ENCODE measurements at regions of chr16 and their contacts with region 1.

Region 1: GRCh38 chr16:11797166-11797956 is at the start of gene ZC3H7A:
- DNase-seq: peak; percentile 97
- ATAC-seq: peak; percentile 97
- H3K4me3 ChIP-seq: peak within 1 kb of the TSS; percentile 81 to 99 (median 87)
- H3K4me3 Mint-ChIP-seq: peak within 1 kb of the TSS; percentile 89
- H3K27ac ChIP-seq: peak within 1 kb of the TSS; percentile 93 to 96
- H3K27ac Mint-ChIP-seq: peak within 1 kb of the TSS; percentile 98
- H3K4me1 ChIP-seq: peaks cover 40 to 43% of the 10 kb centered on the region in 2 donors
- H3K4me1 Mint-ChIP-seq: peaks cover 67% of the 10 kb centered on the region
- H3K27me3 ChIP-seq: no peaks in the 10 kb centered on the region
- H3K27me3 Mint-ChIP-seq: no peaks in the 10 kb centered on the region
- CTCF ChIP-seq: peak; percentile 65
- total RNA-seq, gene ZC3H7A: 113 and 126 TPM in 2 replicates

Region 2: GRCh38 chr16:11047057-11047456 is 750.3 kb before region 1 on chr16:
- CTCF ChIA-PET with region 1: no interaction called
- POLR2A ChIA-PET with region 1: no interaction called
- intact Hi-C with region 1: no loop called
- DNase-seq: no peak
- ATAC-seq: no peak
- H3K4me3 ChIP-seq: no peak overlapping the region
- H3K4me3 Mint-ChIP-seq: no peak overlapping the region
- H3K27ac ChIP-seq: no peak overlapping the region
- H3K27ac Mint-ChIP-seq: no peak overlapping the region
- H3K4me1 ChIP-seq: peaks cover 6 to 8% of the 10 kb centered on the region in 2 donors
- H3K4me1 Mint-ChIP-seq: peaks cover 10% of the 10 kb centered on the region
- H3K27me3 ChIP-seq: no peaks in the 10 kb centered on the region
- H3K27me3 Mint-ChIP-seq: no peaks in the 10 kb centered on the region
- CTCF ChIP-seq: no peak

Region 3: GRCh38 chr16:11586856-11587642 is 210.3 kb before region 1 on chr16 and contains the start of gene LITAF:
- CTCF ChIA-PET with region 1: no interaction called
- POLR2A ChIA-PET with region 1: interaction called, 5 read pairs
- intact Hi-C with region 1: loop called (anchors 5 kb)
- DNase-seq: peak; percentile 78
- ATAC-seq: peak; percentile 59
- H3K4me3 ChIP-seq: peak within 1 kb of the TSS; percentile 71 to 91 (median 75)
- H3K4me3 Mint-ChIP-seq: peak within 1 kb of the TSS; percentile 94
- H3K27ac ChIP-seq: peak within 1 kb of the TSS; percentile 82 to 97
- H3K27ac Mint-ChIP-seq: peak within 1 kb of the TSS; percentile 97
- H3K4me1 ChIP-seq: peaks cover 42 to 50% of the 10 kb centered on the region in 2 donors
- H3K4me1 Mint-ChIP-seq: peaks cover 48% of the 10 kb centered on the region
- H3K27me3 ChIP-seq: no peaks in the 10 kb centered on the region
- H3K27me3 Mint-ChIP-seq: no peaks in the 10 kb centered on the region
- CTCF ChIP-seq: no peak
- total RNA-seq, gene LITAF: 125 and 131 TPM in 2 replicates

Region 4: GRCh38 chr16:11742539-11743307 is 54.6 kb before region 1 on chr16 and contains the start of gene TXNDC11:
- CTCF ChIA-PET with region 1: interaction called, 23 read pairs
- POLR2A ChIA-PET with region 1: interaction called, 30 read pairs
- intact Hi-C with region 1: loop called (anchors 1 kb)
- DNase-seq: peak; percentile 100
- ATAC-seq: peak; percentile 91
- H3K4me3 ChIP-seq: peak within 1 kb of the TSS; percentile 76 to 97 (median 83)
- H3K4me3 Mint-ChIP-seq: peak within 1 kb of the TSS; percentile 97
- H3K27ac ChIP-seq: peak within 1 kb of the TSS; percentile 81 to 88
- H3K27ac Mint-ChIP-seq: peak within 1 kb of the TSS; percentile 96
- H3K4me1 ChIP-seq: peaks cover 31 to 44% of the 10 kb centered on the region in 2 donors
- H3K4me1 Mint-ChIP-seq: peaks cover 52% of the 10 kb centered on the region
- H3K27me3 ChIP-seq: no peaks in the 10 kb centered on the region
- H3K27me3 Mint-ChIP-seq: no peaks in the 10 kb centered on the region
- CTCF ChIP-seq: no peak
- total RNA-seq, gene TXNDC11: 49.7 and 50.2 TPM in 2 replicates

Region 5: DNA sequence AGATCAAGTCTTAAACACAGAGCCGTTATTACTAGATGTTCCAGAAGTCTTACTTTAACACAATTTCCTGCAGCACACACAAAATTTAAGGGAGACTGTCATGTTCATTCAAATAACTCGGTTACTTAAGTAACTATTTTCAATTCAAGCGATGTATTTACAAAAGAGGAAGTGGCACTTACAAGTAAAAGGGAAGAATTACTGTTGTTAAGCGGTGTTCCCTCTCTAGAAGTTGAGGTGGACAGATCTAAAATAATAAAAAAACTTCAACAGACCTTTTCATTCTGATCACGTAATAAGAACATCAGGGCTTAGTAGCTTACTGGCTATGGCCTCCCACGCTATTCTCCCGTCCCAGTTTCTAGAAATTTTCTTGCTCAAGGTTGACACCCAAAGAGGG is 28.5 kb before region 1 on chr16:
- CTCF ChIA-PET with region 1: interaction called, 15 read pairs
- POLR2A ChIA-PET with region 1: interaction called, 8 read pairs
- intact Hi-C with region 1: loop called (anchors 1 kb)
- DNase-seq: peak; percentile 75
- ATAC-seq: peak; percentile 76
- H3K4me3 ChIP-seq: peak overlapping the region in 3 of 5 experiments; percentile 12 to 32 (median 13)
- H3K4me3 Mint-ChIP-seq: peak overlapping the region; percentile 73
- H3K27ac ChIP-seq: peak overlapping the region; percentile 67 to 68
- H3K27ac Mint-ChIP-seq: peak overlapping the region; percentile 89
- H3K4me1 ChIP-seq: peaks cover 25 to 39% of the 10 kb centered on the region in 2 donors
- H3K4me1 Mint-ChIP-seq: peaks cover 47% of the 10 kb centered on the region
- H3K27me3 ChIP-seq: no peaks in the 10 kb centered on the region
- H3K27me3 Mint-ChIP-seq: no peaks in the 10 kb centered on the region
- CTCF ChIP-seq: no peak

Region 6: DNA sequence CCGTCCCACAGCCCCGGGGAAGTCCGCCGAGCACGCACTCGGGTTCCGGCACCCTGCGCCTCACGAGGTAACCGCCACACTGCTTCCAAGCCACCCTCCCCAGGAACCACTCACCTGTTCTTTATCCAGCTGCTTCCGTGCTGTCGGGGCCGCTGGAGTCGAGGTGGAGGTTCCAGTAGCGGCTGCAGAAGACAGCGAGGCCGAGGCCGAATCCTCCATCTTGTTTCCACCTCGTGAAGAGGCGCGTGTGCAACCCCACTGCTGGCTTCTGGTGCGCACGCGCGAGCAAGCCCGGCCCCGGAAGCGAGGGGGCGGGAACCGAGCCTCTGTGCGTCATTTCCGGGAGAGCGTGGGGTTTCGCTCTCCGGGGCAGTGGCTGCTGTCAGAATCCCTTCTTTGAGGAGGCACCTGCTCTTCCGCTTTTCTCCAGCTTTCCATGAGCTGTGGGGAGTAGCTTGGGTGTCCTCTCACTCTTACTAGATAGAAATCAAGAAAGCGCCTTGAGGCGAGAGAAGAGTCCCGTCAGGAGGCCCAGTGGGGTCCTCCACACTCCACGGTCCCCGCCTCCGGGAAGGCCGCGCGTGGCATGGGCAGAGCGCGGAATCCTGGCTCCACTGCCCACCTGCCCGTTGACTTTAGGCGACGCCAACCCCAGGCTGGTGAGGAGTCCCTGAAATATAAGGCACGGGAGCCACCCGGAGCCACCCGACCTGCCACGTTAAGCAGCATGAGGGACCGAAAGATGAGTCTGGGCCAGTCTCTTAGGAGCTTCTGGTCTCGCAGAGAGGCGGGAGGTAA is 54.1 kb after region 1 on chr16 and contains the start of gene RSL1D1:
- CTCF ChIA-PET with region 1: interaction called, 3 read pairs
- POLR2A ChIA-PET with region 1: no interaction called
- intact Hi-C with region 1: loop called (anchors 1 kb)
- DNase-seq: peak; percentile 98
- ATAC-seq: peak; percentile 88
- H3K4me3 ChIP-seq: peak within 1 kb of the TSS; percentile 73 to 97 (median 91)
- H3K4me3 Mint-ChIP-seq: peak within 1 kb of the TSS; percentile 97
- H3K27ac ChIP-seq: peak within 1 kb of the TSS; percentile 81 to 94
- H3K27ac Mint-ChIP-seq: peak within 1 kb of the TSS; percentile 97
- H3K4me1 ChIP-seq: peaks cover 18 to 27% of the 10 kb centered on the region in 2 donors
- H3K4me1 Mint-ChIP-seq: peaks cover 40% of the 10 kb centered on the region
- H3K27me3 ChIP-seq: no peaks in the 10 kb centered on the region
- H3K27me3 Mint-ChIP-seq: no peaks in the 10 kb centered on the region
- CTCF ChIP-seq: no peak
- total RNA-seq, gene RSL1D1: 146 and 167 TPM in 2 replicates